ENCODE measurements at regions of chr18 and their contacts with region 1.

Region 1: GRCh38 chr18:4720518-4720917 is 265.4 kb upstream of the DLGAP1 start:
- DNase-seq: no peak
- ATAC-seq: no peak
- H3K4me3 ChIP-seq: no peak overlapping the region
- H3K4me3 Mint-ChIP-seq: no peak overlapping the region
- H3K27ac ChIP-seq: no peak overlapping the region
- H3K27ac Mint-ChIP-seq: no peak overlapping the region
- H3K4me1 ChIP-seq: no peaks in the 10 kb centered on the region
- H3K4me1 Mint-ChIP-seq: no peaks in the 10 kb centered on the region
- H3K27me3 ChIP-seq: no peaks in the 10 kb centered on the region
- H3K27me3 Mint-ChIP-seq: no peaks in the 10 kb centered on the region
- CTCF ChIP-seq: no peak

Region 2: DNA sequence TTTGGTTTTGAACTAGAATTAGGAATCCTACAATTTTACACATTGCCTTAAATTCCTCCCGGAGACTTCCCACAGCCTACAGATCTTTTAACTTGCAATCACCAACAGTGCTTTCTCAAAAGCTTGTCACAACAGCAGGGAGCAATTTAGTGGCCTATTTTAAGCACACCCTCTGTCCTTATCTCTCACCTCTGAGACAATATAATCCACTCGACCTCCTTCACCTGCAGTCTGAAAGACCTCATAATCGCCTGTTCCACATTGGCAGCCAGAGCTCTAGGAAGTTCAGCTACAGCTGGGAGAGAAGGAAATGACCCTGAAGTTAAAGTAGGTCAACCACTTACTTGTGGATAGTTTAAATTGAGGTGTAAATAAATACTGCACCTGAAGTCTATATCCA is 15.7 kb before region 1 on chr18:
- CTCF ChIA-PET with region 1: no interaction called
- POLR2A ChIA-PET with region 1: no interaction called
- intact Hi-C with region 1: loop called in 1 of 2 experiments (anchors 1 kb)
- DNase-seq: no peak
- ATAC-seq: no peak
- H3K4me3 ChIP-seq: no peak overlapping the region
- H3K4me3 Mint-ChIP-seq: no peak overlapping the region
- H3K27ac ChIP-seq: no peak overlapping the region
- H3K27ac Mint-ChIP-seq: no peak overlapping the region
- H3K4me1 ChIP-seq: no peaks in the 10 kb centered on the region
- H3K4me1 Mint-ChIP-seq: no peaks in the 10 kb centered on the region
- H3K27me3 ChIP-seq: no peaks in the 10 kb centered on the region
- H3K27me3 Mint-ChIP-seq: no peaks in the 10 kb centered on the region
- CTCF ChIP-seq: no peak

Region 3: DNA sequence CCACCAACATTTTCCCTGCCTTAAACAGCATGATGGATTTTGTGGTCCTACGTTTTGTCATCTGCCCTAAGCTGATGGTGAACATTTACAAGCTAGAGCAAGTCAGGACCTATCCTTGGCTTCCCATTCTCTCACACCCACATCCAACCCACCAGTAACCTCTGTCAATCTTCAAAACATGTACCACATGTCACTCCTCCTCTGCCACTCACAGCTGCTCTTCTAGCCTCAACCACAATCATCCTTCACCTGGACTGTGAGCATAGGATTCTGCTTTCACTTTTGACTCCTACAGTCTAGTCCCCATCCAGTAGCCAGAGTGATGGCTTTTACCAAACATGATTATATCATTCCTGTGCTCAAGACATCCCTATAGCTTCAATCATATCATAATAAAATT is 14.4 kb after region 1 on chr18:
- CTCF ChIA-PET with region 1: no interaction called
- POLR2A ChIA-PET with region 1: no interaction called
- intact Hi-C with region 1: no loop called
- DNase-seq: no peak
- ATAC-seq: no peak
- H3K4me3 ChIP-seq: no peak overlapping the region
- H3K4me3 Mint-ChIP-seq: no peak overlapping the region
- H3K27ac ChIP-seq: no peak overlapping the region
- H3K27ac Mint-ChIP-seq: no peak overlapping the region
- H3K4me1 ChIP-seq: no peaks in the 10 kb centered on the region
- H3K4me1 Mint-ChIP-seq: no peaks in the 10 kb centered on the region
- H3K27me3 ChIP-seq: no peaks in the 10 kb centered on the region
- H3K27me3 Mint-ChIP-seq: no peaks in the 10 kb centered on the region
- CTCF ChIP-seq: no peak